HCT116 (cell line): ENCODE measurements at regions of chr4 and their contacts with region 1.

Region 1: DNA sequence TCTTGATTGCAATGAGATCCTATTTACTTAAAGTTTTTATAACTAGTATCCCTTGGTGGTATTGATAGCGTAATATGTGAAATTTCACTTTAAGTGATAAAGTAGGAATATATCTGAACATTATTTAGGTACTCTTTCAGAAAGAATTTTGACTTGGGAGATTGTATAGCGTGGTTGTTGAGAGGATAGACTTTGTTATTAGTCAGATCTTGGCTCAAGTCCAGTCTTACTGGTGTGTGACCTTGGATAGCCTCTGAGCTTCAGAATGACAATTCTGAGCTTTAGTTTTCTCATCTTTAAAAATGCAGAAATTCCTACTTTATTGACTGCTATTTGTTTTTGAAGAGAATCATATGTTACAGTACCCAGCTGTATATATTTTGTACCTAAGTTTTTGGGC is 32.6 kb downstream of the DCK start:
- DNase-seq: peak; percentile 55
- ATAC-seq: peak; percentile 86
- H3K4me3 ChIP-seq: no peak overlapping the region
- H3K27ac ChIP-seq: no peak overlapping the region
- H3K4me1 ChIP-seq: peaks cover 10 to 22% of the 10 kb centered on the region in 2 experiments
- H3K27me3 ChIP-seq: no peaks in the 10 kb centered on the region
- CTCF ChIP-seq: no peak
- POLR2A ChIP-seq: no peak
- RAD21 ChIP-seq: no peak

Region 2: DNA sequence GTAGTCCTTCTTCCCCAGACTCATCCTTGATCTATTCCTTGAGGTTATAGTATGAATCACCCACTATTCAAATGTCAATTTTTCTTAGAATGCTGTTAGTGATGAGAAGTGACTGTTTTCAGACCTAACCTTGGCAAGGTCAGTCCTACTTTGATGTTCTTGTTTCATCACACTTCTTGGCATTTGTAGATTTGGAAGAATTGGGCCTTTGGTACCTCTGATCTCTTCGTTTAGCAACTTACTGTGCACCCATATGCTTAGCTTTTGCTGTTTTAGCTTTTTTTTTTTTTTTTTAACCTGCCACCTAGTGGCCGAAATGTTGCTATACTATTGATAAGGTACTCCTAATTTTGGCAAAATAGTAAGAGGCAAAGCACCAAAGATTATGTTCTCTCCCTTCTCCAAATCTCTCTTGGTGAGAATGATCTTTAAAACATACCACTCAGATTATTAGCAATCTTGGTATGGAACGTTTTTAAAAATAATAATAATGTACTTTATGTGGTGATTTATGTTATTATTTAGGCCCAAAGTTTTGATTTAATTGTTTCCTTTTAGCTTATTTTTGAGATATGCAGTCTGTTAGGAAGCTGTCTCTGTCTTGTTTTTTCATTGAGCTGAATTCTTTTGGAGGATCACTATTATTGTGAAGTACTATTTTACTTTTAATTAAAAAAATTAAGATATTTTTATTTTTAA is 16.0 kb before region 1 on chr4:
- CTCF ChIA-PET with region 1: interaction called, 44 read pairs
- POLR2A ChIA-PET with region 1: no interaction called
- RAD21 ChIA-PET with region 1: interaction called in 1 of 2 experiments, 4 read pairs
- intact Hi-C with region 1: no loop called
- DNase-seq: peak; percentile 39
- ATAC-seq: peak; percentile 63; the same call in 1 of the 2 replicates
- H3K4me3 ChIP-seq: no peak overlapping the region
- H3K27ac ChIP-seq: no peak overlapping the region
- H3K4me1 ChIP-seq: peaks cover 0 to 6% of the 10 kb centered on the region in 2 experiments; a peak in 2 of 4 replicates
- H3K27me3 ChIP-seq: no peaks in the 10 kb centered on the region
- CTCF ChIP-seq: peak; percentile 46 to 90 (median 52); a peak in 5 of 6 replicates
- POLR2A ChIP-seq: no peak
- RAD21 ChIP-seq: peak; percentile 50

Region 3: DNA sequence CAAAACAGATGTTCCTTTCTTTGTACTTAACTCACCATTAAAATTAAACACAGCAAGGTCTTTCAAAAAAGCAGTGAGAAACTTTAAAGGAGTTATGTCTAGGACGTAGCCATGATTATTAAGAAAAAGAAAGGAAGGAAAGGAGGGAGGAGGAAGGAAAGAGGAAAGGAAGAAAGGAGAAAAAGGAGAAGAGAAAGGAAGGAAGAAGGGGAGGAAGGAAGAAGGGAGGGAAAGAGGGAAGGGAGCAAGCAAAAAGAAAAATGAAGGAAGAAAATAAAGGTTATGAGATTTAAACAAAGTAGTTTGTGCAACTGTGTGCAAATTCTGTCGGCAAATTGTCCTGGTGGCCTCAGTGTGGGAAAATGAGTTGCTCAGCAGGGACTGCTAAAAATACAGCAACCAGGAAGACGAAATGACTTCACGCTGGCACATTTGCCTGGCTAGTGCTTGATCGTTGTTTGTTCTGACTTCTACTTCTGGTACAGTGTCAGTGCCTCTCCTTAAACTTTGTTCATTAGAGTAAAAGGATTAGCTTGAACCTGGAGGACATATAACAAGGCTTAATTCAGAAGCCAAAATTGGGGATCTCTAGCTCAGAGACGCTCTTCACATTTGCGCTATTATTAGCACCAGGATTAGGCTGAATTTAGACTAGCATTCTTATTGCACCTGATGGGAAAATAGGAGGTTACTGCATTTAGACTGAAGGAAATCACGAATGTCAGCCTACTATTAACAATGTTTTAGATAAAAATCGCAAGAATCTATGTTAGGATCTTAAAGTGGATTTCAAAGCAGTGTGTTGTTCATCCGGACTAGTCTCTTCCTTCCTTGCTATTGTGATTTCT is 48.6 kb after region 1 on chr4:
- CTCF ChIA-PET with region 1: no interaction called
- POLR2A ChIA-PET with region 1: no interaction called
- RAD21 ChIA-PET with region 1: no interaction called
- intact Hi-C with region 1: loop called (anchors 1 kb)
- DNase-seq: no peak
- ATAC-seq: no peak
- H3K4me3 ChIP-seq: no peak overlapping the region
- H3K27ac ChIP-seq: no peak overlapping the region
- H3K4me1 ChIP-seq: no peaks in the 10 kb centered on the region
- H3K27me3 ChIP-seq: peaks cover 5% of the 10 kb centered on the region; the same call in 1 of the 2 replicates
- CTCF ChIP-seq: no peak
- POLR2A ChIP-seq: no peak
- RAD21 ChIP-seq: no peak

Region 4: DNA sequence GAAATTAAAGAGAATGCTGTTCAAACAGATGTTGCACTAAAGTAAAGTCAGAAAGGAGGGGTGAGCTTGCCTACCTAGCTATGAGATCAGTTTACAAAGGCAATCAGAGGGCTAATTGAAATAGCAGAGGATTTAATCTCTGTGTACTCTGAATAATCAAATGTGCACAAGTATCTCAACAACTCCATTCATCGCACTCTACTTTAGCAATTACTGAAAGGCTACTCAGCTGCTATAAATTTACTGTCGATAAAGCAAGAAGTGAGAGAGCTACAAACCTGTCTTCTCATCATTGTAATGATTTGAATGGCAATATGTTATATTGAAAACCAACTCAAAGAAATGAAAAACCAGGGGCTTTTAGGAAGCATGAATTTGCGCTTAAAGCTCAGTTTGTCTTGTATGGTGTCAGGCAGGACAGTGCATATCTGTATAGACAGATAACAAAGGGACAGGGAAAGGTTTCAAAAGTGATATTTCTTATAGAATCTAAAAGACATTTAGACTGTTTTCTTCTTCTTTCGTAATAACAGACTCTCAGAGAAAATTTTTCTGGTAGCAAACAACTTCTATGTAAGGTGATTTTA is 723.0 kb after region 1 on chr4:
- CTCF ChIA-PET with region 1: no interaction called
- POLR2A ChIA-PET with region 1: no interaction called
- RAD21 ChIA-PET with region 1: no interaction called
- intact Hi-C with region 1: no loop called
- DNase-seq: no peak
- ATAC-seq: no peak
- H3K4me3 ChIP-seq: no peak overlapping the region
- H3K27ac ChIP-seq: no peak overlapping the region
- H3K4me1 ChIP-seq: no peaks in the 10 kb centered on the region
- H3K27me3 ChIP-seq: no peaks in the 10 kb centered on the region
- CTCF ChIP-seq: no peak
- POLR2A ChIP-seq: no peak
- RAD21 ChIP-seq: no peak